HAP-1 (cell line): ENCODE measurements at regions of chr15 and their contacts with region 1.

Region 1: GRCh38 chr15:86743283-86743903 is 663.7 kb downstream of the AGBL1 start:
- DNase-seq: peak; percentile 60 to 87
- H3K4me3 ChIP-seq: no peak overlapping the region
- H3K4me1 ChIP-seq: no peaks in the 10 kb centered on the region
- H3K27me3 ChIP-seq: no peaks in the 10 kb centered on the region

Region 2: DNA sequence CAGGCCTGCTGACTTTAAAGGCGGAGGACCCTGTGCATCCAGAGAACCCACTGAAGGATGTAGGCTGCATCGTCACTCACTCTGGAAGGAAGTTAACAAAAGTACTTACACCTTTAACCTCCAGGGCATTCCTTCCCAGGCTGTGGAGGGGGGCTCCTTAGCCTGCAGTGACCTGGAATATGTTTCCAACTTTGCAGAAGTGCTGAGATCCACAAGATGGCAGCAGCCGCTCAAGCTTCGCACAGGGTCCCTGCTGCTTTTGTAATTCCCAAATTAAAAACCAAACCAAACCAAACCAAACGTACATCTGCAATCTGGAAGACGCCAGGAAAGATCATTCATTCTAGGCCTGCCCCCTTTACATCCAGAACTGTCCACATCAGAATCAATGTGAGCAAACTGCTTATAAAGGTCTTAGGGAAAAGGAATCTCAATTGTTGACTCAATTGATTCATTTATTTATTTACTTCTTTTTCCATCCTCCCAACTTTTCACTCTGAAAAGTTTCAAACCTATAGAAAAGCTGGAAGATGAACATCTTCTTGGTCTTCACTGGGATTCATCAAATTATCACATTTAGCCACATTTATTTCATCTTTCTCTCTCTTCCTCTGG is 878.2 kb before region 1 on chr15:
- in situ Hi-C with region 1: loop called (anchors 10 kb)
- DNase-seq: peak; percentile 70 to 77
- H3K4me3 ChIP-seq: no peak overlapping the region
- H3K4me1 ChIP-seq: no peaks in the 10 kb centered on the region
- H3K27me3 ChIP-seq: peaks cover 30% of the 10 kb centered on the region

Region 3: DNA sequence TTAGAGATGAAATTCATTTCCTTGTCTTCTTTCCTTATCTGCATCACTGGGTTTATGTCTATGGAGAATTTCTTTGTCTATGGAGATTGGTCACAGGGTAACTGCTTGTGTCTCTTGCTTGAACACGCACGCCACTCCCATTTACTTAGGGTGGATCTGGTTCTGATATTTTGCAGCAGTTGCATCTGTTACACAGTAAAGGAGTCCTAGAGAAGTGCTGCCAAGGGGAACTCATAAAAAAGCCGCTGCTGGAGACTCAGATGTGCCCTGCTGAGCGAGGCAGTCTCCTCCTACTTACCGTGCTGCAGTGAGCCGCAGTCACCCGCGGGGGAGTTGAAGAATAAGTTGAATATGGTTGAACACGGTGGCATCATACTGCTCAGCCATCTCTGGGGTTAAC is 843.5 kb before region 1 on chr15:
- in situ Hi-C with region 1: no loop called
- DNase-seq: no peak
- H3K4me3 ChIP-seq: no peak overlapping the region
- H3K4me1 ChIP-seq: no peaks in the 10 kb centered on the region
- H3K27me3 ChIP-seq: peaks cover 16% of the 10 kb centered on the region

Region 4: GRCh38 chr15:86231864-86232721 is 511.3 kb before region 1 on chr15:
- in situ Hi-C with region 1: loop called (anchors 5 kb)
- DNase-seq: peak; percentile 78 to 86
- H3K4me3 ChIP-seq: no peak overlapping the region
- H3K4me1 ChIP-seq: peaks cover 12% of the 10 kb centered on the region
- H3K27me3 ChIP-seq: peaks cover 13% of the 10 kb centered on the region

Region 5: DNA sequence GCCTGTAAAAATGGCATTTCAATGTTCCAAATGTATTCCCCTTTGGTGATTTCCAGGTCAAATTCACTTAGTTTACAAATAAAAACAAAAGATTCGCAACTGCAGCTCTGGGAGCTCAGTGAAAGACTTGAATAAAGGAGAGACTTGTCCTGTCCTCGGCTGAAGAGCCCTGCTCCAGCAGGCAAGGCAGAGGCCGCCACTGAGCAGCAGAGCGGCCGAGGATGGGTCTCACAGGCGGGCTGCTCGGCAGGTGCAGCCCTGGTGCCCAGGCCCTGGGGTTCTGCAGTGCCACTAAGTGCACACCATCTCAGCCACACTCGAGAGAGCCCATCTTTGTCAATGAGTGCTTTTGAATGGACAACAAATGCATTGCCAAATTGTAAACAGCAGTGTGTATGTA is 192.4 kb after region 1 on chr15:
- in situ Hi-C with region 1: no loop called
- DNase-seq: no peak
- H3K4me3 ChIP-seq: no peak overlapping the region
- H3K4me1 ChIP-seq: no peaks in the 10 kb centered on the region
- H3K27me3 ChIP-seq: no peaks in the 10 kb centered on the region